Uterus (tissue), 4 donors: ENCODE measurements at regions of chr1 and their contacts with region 1.

Region 1: GRCh38 chr1:184805667-184806295 is 51.1 kb upstream of the EDEM3 start:
- DNase-seq: peak; percentile 91 to 93
- H3K4me3 ChIP-seq: no peak overlapping the region
- H3K27ac ChIP-seq: peak overlapping the region; percentile 15 to 34
- H3K4me1 ChIP-seq: peaks cover under 1 to 3% of the 10 kb centered on the region in 2 donors
- H3K27me3 ChIP-seq: no peaks in the 10 kb centered on the region
- CTCF ChIP-seq: peak; percentile 88 to 94 (median 92)
- POLR2A ChIP-seq: no peak

Region 2: DNA sequence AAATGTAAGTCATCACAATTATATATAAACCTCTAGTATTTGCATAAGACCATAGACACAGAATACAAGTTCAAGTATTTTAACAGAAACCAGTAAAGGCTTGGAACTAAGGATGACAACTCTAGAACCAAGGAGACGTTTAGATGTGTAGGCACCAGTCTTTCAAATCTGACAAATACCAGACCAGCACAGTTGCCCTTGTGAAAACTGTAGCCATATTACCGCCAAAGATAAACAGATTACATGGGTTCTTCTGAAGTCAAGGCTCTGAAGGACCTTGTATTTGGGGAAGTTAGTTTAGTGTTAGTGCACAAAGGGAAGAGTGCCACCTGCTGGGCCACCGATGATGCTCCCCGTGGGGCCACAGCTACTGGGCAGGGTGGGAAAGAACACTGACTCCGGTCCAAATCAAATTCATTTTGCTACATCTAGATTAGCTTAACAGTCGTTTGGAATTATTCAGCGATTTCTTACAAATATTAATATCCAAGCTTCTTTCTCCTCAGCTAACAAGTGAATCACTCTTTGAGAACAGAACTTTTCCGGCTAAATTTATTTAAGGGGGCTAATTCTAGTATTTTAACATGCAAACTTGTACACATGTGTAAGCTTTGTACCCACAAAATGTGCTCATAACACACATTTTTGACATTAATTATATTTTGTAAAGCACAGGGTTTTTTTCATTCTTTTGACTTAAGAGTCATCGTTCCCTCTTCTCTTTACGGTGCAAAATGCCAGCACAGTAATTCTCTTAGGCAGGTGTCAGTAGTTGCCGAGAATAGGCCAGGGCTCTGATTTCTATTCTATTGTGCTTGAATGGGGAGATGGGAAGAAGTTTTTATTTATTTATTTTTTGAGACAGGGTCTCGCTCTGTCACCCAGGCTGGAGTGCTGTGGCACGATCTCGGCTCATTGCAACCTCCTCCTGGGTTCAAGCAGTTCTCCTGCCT is 176.5 kb after region 1 on chr1:
- intact Hi-C with region 1: loop called (anchors 2 kb)
- DNase-seq: peak; percentile 77 to 79
- H3K4me3 ChIP-seq: no peak overlapping the region
- H3K27ac ChIP-seq: no peak overlapping the region
- H3K4me1 ChIP-seq: no peaks in the 10 kb centered on the region
- H3K27me3 ChIP-seq: no peaks in the 10 kb centered on the region
- CTCF ChIP-seq: peak; percentile 83 to 90 (median 84)
- POLR2A ChIP-seq: no peak

Region 3: GRCh38 chr1:184994301-184994700 is 188.5 kb after region 1 on chr1:
- intact Hi-C with region 1: no loop called
- DNase-seq: no peak
- H3K4me3 ChIP-seq: no peak overlapping the region
- H3K27ac ChIP-seq: no peak overlapping the region
- H3K4me1 ChIP-seq: no peaks in the 10 kb centered on the region
- H3K27me3 ChIP-seq: no peaks in the 10 kb centered on the region
- CTCF ChIP-seq: no peak
- POLR2A ChIP-seq: no peak